Transverse colon (tissue), 4 donors: ENCODE measurements at regions of chr14 and their contacts with region 1.

Region 1: GRCh38 chr14:72128629-72129028 is 196.4 kb downstream of the RGS6 start:
- DNase-seq: no peak
- H3K4me3 ChIP-seq: no peak overlapping the region
- H3K27ac ChIP-seq: no peak overlapping the region
- H3K4me1 ChIP-seq: peaks cover 0 to 6% (median 0%) of the 10 kb centered on the region in 4 donors
- H3K27me3 ChIP-seq: no peaks in the 10 kb centered on the region
- CTCF ChIP-seq: no peak
- EP300 ChIP-seq: no peak
- POLR2A ChIP-seq: no peak

Region 2: DNA sequence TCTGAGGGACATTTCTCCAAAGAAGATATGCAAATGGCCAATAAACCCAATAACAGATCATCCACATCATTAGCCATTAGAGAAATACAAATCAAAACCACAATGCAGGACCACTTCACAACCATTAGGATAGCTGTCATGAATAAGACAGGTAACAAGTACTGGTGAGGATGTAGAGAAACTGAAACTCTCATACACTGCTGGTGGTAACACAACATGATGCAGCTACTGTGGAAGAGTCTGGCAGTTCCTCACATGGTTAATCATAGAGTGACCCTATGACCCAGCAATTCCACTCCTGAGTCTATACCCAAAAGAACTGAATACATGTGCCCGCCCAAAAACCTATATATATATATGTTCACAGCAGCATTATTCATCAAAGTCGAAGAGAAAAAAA is 1447.9 kb before region 1 on chr14:
- in situ Hi-C with region 1: no loop called
- intact Hi-C with region 1: no loop called
- DNase-seq: no peak
- H3K4me3 ChIP-seq: no peak overlapping the region
- H3K27ac ChIP-seq: no peak overlapping the region
- H3K4me1 ChIP-seq: no peaks in the 10 kb centered on the region
- H3K27me3 ChIP-seq: no peaks in the 10 kb centered on the region
- CTCF ChIP-seq: no peak
- EP300 ChIP-seq: no peak
- POLR2A ChIP-seq: no peak

Region 3: GRCh38 chr14:72084935-72085334 is 43.7 kb before region 1 on chr14:
- in situ Hi-C with region 1: no loop called
- intact Hi-C with region 1: loop called (anchors 1 kb)
- DNase-seq: no peak
- H3K4me3 ChIP-seq: no peak overlapping the region
- H3K27ac ChIP-seq: no peak overlapping the region
- H3K4me1 ChIP-seq: no peaks in the 10 kb centered on the region
- H3K27me3 ChIP-seq: no peaks in the 10 kb centered on the region
- CTCF ChIP-seq: no peak
- EP300 ChIP-seq: no peak
- POLR2A ChIP-seq: no peak

Region 4: GRCh38 chr14:72256056-72256455 is 127.4 kb after region 1 on chr14:
- in situ Hi-C with region 1: no loop called
- intact Hi-C with region 1: no loop called
- DNase-seq: no peak
- H3K4me3 ChIP-seq: no peak overlapping the region
- H3K27ac ChIP-seq: no peak overlapping the region
- H3K4me1 ChIP-seq: no peaks in the 10 kb centered on the region
- H3K27me3 ChIP-seq: no peaks in the 10 kb centered on the region
- CTCF ChIP-seq: no peak
- EP300 ChIP-seq: no peak
- POLR2A ChIP-seq: no peak